ENCODE measurements at regions of chr22 and their contacts with region 1.

Region 1: GRCh38 chr22:46661221-46661851 is 41.1 kb downstream of the GRAMD4 start:
- DNase-seq: peak in 1 of 4 donors; percentile 29
- ATAC-seq: no peak
- H3K4me3 ChIP-seq: no peak overlapping the region
- H3K27ac ChIP-seq: peak overlapping the region; percentile 22 to 58 (median 30)
- H3K4me1 ChIP-seq: peaks cover 23% of the 10 kb centered on the region
- H3K27me3 ChIP-seq: no peaks in the 10 kb centered on the region
- CTCF ChIP-seq: no peak
- POLR2A ChIP-seq: no peak

Region 2: GRCh38 chr22:44684506-44685383 is 1976.6 kb before region 1 on chr22:
- intact Hi-C with region 1: no loop called
- DNase-seq: peak; percentile 84 to 89 (median 87)
- ATAC-seq: peak; percentile 95
- H3K4me3 ChIP-seq: no peak overlapping the region
- H3K27ac ChIP-seq: no peak overlapping the region
- H3K4me1 ChIP-seq: peaks cover 10% of the 10 kb centered on the region
- H3K27me3 ChIP-seq: no peaks in the 10 kb centered on the region
- CTCF ChIP-seq: peak; percentile 97 to 99 (median 98)
- POLR2A ChIP-seq: no peak

Region 3: GRCh38 chr22:46563381-46564083 is 97.8 kb before region 1 on chr22:
- intact Hi-C with region 1: loop called (anchors 10 kb)
- DNase-seq: peak; percentile 80 to 88 (median 84)
- ATAC-seq: peak; percentile 87
- H3K4me3 ChIP-seq: no peak overlapping the region
- H3K27ac ChIP-seq: peak overlapping the region; percentile 37 to 73 (median 52)
- H3K4me1 ChIP-seq: peaks cover 10% of the 10 kb centered on the region
- H3K27me3 ChIP-seq: no peaks in the 10 kb centered on the region
- CTCF ChIP-seq: peak; percentile 71 to 91 (median 85)
- POLR2A ChIP-seq: no peak

Region 4: DNA sequence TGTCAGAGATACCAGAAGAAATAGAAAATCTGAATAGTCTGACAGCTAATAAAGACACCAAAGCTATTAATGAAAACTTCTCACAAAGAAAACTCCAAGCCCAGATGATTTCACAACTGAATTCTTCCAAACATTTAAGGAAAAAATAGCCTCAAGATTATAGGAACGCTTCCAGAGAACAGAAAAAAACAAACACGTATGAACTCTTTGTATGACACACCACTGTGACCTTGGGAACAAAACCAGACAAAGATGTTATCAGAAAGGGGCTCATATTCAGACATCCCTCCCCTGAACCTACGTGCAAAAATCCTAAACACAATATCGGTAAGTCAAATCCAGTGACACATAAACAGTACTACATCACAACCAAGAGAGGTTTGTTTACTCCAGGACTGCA is 53.2 kb after region 1 on chr22:
- intact Hi-C with region 1: no loop called
- DNase-seq: no peak
- ATAC-seq: no peak
- H3K4me3 ChIP-seq: no peak overlapping the region
- H3K27ac ChIP-seq: peak overlapping the region in 1 of 4 donors; percentile 34
- H3K4me1 ChIP-seq: peaks cover 11% of the 10 kb centered on the region
- H3K27me3 ChIP-seq: no peaks in the 10 kb centered on the region
- CTCF ChIP-seq: no peak
- POLR2A ChIP-seq: no peak

Measured in body of pancreas (tissue), 4 donors.